Naive thymus-derived CD4-positive, alpha-beta T cell (primary cell): ENCODE measurements at regions of chr5 and their contacts with region 1.

Region 1: GRCh38 chr5:45038366-45038987 is 229.7 kb downstream of the MRPS30 start:
- DNase-seq: no peak
- ATAC-seq: no peak
- H3K4me3 ChIP-seq: no peak overlapping the region
- H3K4me3 Mint-ChIP-seq: no peak overlapping the region
- H3K27ac ChIP-seq: no peak overlapping the region
- H3K27ac Mint-ChIP-seq: no peak overlapping the region
- H3K4me1 ChIP-seq: no peaks in the 10 kb centered on the region
- H3K4me1 Mint-ChIP-seq: no peaks in the 10 kb centered on the region
- H3K27me3 ChIP-seq: no peaks in the 10 kb centered on the region
- H3K27me3 Mint-ChIP-seq: no peaks in the 10 kb centered on the region

Region 2: GRCh38 chr5:44862808-44863207 is 175.7 kb before region 1 on chr5:
- CTCF ChIA-PET with region 1: no interaction called
- POLR2A ChIA-PET with region 1: no interaction called
- intact Hi-C with region 1: loop called in 1 of 2 experiments (anchors 10 kb)
- DNase-seq: no peak
- ATAC-seq: no peak
- H3K4me3 ChIP-seq: no peak overlapping the region
- H3K4me3 Mint-ChIP-seq: no peak overlapping the region
- H3K27ac ChIP-seq: no peak overlapping the region
- H3K27ac Mint-ChIP-seq: no peak overlapping the region
- H3K4me1 ChIP-seq: no peaks in the 10 kb centered on the region
- H3K4me1 Mint-ChIP-seq: no peaks in the 10 kb centered on the region
- H3K27me3 ChIP-seq: no peaks in the 10 kb centered on the region
- H3K27me3 Mint-ChIP-seq: peaks cover 0 to 13% (median 5%) of the 10 kb centered on the region in 5 donors

Region 3: GRCh38 chr5:45017568-45017967 is 20.9 kb before region 1 on chr5:
- CTCF ChIA-PET with region 1: no interaction called
- POLR2A ChIA-PET with region 1: no interaction called
- intact Hi-C with region 1: no loop called
- DNase-seq: no peak
- ATAC-seq: no peak
- H3K4me3 ChIP-seq: no peak overlapping the region
- H3K4me3 Mint-ChIP-seq: no peak overlapping the region
- H3K27ac ChIP-seq: no peak overlapping the region
- H3K27ac Mint-ChIP-seq: no peak overlapping the region
- H3K4me1 ChIP-seq: no peaks in the 10 kb centered on the region
- H3K4me1 Mint-ChIP-seq: no peaks in the 10 kb centered on the region
- H3K27me3 ChIP-seq: no peaks in the 10 kb centered on the region
- H3K27me3 Mint-ChIP-seq: no peaks in the 10 kb centered on the region